HepG2 (cell line): ENCODE measurements at regions of chr11 and their contacts with region 1.

Region 1: GRCh38 chr11:27472398-27473016 is at the start of gene LGR4:
- DNase-seq: peak; percentile 97
- ATAC-seq: peak; percentile 93
- H3K4me3 ChIP-seq: peak within 1 kb of the TSS; percentile 64 to 92 (median 85)
- H3K27ac ChIP-seq: peak within 1 kb of the TSS; percentile 90
- H3K4me1 ChIP-seq: peaks cover 52% of the 10 kb centered on the region
- H3K27me3 ChIP-seq: no peaks in the 10 kb centered on the region; a peak in 1 of 5 replicates
- CTCF ChIP-seq: no peak
- EP300 ChIP-seq: no peak
- POLR2A ChIP-seq: peak; percentile 91 to 95
- RAD21 ChIP-seq: peak; percentile 35; the same call in 1 of the 2 replicates
- total RNA-seq, gene LGR4: 51.4 and 68.7 TPM in 2 replicates

Region 2: GRCh38 chr11:27296497-27296896 is 176.0 kb before region 1 on chr11:
- CTCF ChIA-PET with region 1: no interaction called
- POLR2A ChIA-PET with region 1: interaction called, 8 read pairs
- in situ Hi-C with region 1: no loop called
- intact Hi-C with region 1: loop called (anchors 5 kb)
- DNase-seq: peak; percentile 44
- ATAC-seq: peak; percentile 74
- H3K4me3 ChIP-seq: no peak overlapping the region
- H3K27ac ChIP-seq: no peak overlapping the region
- H3K4me1 ChIP-seq: peaks cover 51% of the 10 kb centered on the region
- H3K27me3 ChIP-seq: no peaks in the 10 kb centered on the region
- CTCF ChIP-seq: peak; percentile 72
- EP300 ChIP-seq: no peak
- POLR2A ChIP-seq: no peak
- RAD21 ChIP-seq: peak; percentile 50

Region 3: GRCh38 chr11:27362749-27363575 is 109.5 kb before region 1 on chr11 and contains the start of gene CCDC34:
- CTCF ChIA-PET with region 1: no interaction called
- POLR2A ChIA-PET with region 1: interaction called, 12 read pairs
- in situ Hi-C with region 1: no loop called
- intact Hi-C with region 1: no loop called
- DNase-seq: peak; percentile 87
- ATAC-seq: peak; percentile 96
- H3K4me3 ChIP-seq: peak within 1 kb of the TSS; percentile 59 to 88 (median 66)
- H3K27ac ChIP-seq: peak within 1 kb of the TSS; percentile 76
- H3K4me1 ChIP-seq: peaks cover 55% of the 10 kb centered on the region
- H3K27me3 ChIP-seq: no peaks in the 10 kb centered on the region; a peak in 1 of 5 replicates
- CTCF ChIP-seq: peak; percentile 42
- EP300 ChIP-seq: no peak
- POLR2A ChIP-seq: peak; percentile 51 to 69; a peak in 3 of 4 replicates
- RAD21 ChIP-seq: peak; percentile 84
- total RNA-seq, gene CCDC34: 34.3 and 37.9 TPM in 2 replicates

Region 4: GRCh38 chr11:27370374-27370773 is 102.1 kb before region 1 on chr11:
- CTCF ChIA-PET with region 1: no interaction called
- POLR2A ChIA-PET with region 1: interaction called, 25 read pairs
- in situ Hi-C with region 1: loop called (anchors 5 kb)
- intact Hi-C with region 1: loop called (anchors 2 kb)
- DNase-seq: no peak
- ATAC-seq: no peak
- H3K4me3 ChIP-seq: no peak overlapping the region
- H3K27ac ChIP-seq: no peak overlapping the region
- H3K4me1 ChIP-seq: peaks cover 27% of the 10 kb centered on the region
- H3K27me3 ChIP-seq: no peaks in the 10 kb centered on the region
- CTCF ChIP-seq: no peak
- EP300 ChIP-seq: no peak
- POLR2A ChIP-seq: no peak
- RAD21 ChIP-seq: no peak

Region 5: GRCh38 chr11:27401833-27402316 is 70.6 kb before region 1 on chr11:
- CTCF ChIA-PET with region 1: no interaction called
- POLR2A ChIA-PET with region 1: interaction called, 40 read pairs
- in situ Hi-C with region 1: loop called (anchors 5 kb)
- intact Hi-C with region 1: no loop called
- DNase-seq: peak; percentile 85
- ATAC-seq: peak; percentile 87
- H3K4me3 ChIP-seq: peak overlapping the region in 2 of 3 experiments; percentile 6; a peak in 1 of 6 replicates
- H3K27ac ChIP-seq: peak overlapping the region; percentile 68
- H3K4me1 ChIP-seq: peaks cover 93% of the 10 kb centered on the region
- H3K27me3 ChIP-seq: no peaks in the 10 kb centered on the region
- CTCF ChIP-seq: no peak
- EP300 ChIP-seq: peak in 1 of 2 experiments; percentile 85; a peak in 2 of 4 replicates
- POLR2A ChIP-seq: no peak
- RAD21 ChIP-seq: no peak

Region 6: DNA sequence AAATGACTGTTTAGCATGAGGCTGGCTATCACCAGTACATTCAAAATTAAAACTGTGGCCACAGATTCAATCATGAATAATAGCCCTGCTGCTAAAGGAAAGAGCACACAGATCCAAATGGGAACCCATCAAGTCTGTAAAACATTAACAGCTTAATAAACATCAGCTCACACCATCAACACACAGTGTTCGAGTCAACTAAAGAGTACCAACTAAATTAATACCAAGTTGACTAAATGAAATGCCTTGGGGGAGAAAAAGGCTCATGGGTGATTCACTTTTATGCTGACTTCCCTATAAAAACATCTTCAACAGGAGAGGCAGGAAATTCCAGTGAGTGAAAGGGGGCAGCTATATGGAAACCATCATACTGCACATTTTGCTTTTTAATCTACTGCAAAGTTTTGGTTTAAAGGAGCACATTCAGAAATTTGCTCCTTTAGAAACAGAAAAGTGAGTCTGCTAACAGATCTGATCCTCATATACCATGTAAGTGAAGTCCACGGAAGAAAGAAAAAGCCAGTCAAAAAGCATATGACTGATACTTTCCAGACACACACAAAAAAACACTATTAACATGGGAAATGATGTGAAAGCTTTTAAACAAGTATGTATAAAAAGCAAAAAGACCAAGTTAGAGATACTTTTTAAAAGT is 16.2 kb before region 1 on chr11:
- CTCF ChIA-PET with region 1: no interaction called
- POLR2A ChIA-PET with region 1: interaction called, 17 read pairs
- in situ Hi-C with region 1: no loop called
- intact Hi-C with region 1: no loop called
- DNase-seq: peak; percentile 55
- ATAC-seq: peak; percentile 52
- H3K4me3 ChIP-seq: peak overlapping the region in 1 of 3 experiments; percentile 23; a peak in 1 of 6 replicates
- H3K27ac ChIP-seq: peak overlapping the region; percentile 5
- H3K4me1 ChIP-seq: peaks cover 90% of the 10 kb centered on the region
- H3K27me3 ChIP-seq: no peaks in the 10 kb centered on the region
- CTCF ChIP-seq: no peak
- EP300 ChIP-seq: peak in 1 of 2 experiments; percentile 23; a peak in 1 of 4 replicates
- POLR2A ChIP-seq: no peak
- RAD21 ChIP-seq: no peak

Region 7: DNA sequence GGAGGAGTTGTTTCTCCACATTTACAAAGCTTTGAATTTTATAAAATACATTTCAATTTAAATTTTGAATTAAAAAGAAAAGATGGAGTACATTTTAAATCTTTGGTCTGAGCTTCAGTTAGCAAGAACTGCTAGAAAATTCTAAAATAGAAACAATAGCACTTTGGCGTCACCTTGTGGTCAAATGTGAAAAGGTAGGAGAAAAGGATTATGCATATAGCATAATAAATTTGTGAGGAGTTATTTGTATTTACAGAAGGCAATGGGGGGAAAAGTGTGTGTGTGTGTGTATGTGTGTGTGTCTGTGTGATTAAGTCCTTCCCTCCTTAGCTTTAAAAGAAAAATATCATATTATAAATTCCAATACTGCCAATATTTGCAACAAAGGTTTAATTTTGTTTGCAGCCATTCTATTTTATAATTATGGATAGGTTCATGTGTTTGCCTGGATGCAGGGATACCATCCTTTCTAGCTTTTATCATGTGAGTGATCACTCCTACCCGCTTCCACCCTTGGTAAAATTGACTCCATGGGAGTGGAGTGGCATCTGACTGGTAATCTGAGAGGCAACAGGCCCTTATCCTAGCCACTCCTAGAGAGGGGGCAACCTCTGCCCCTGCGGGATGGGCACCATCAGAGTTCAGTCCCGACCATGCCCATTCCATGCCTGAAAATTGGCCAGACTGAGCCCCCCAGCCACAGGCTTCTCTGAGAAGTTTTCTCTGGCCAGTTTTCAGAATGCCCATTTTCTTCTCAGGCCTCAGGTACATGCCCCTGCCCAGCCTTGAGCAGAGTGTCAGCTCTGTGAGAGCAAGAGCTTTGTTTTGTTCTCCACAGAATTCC is 13.6 kb after region 1 on chr11:
- CTCF ChIA-PET with region 1: no interaction called
- POLR2A ChIA-PET with region 1: interaction called, 12 read pairs
- in situ Hi-C with region 1: no loop called
- intact Hi-C with region 1: no loop called
- DNase-seq: peak; percentile 54
- ATAC-seq: peak; percentile 54
- H3K4me3 ChIP-seq: no peak overlapping the region
- H3K27ac ChIP-seq: no peak overlapping the region
- H3K4me1 ChIP-seq: peaks cover 6% of the 10 kb centered on the region; the same call in 1 of the 2 replicates
- H3K27me3 ChIP-seq: no peaks in the 10 kb centered on the region; a peak in 1 of 5 replicates
- CTCF ChIP-seq: peak; percentile 75
- EP300 ChIP-seq: no peak
- POLR2A ChIP-seq: no peak
- RAD21 ChIP-seq: peak; percentile 79

Region 8: DNA sequence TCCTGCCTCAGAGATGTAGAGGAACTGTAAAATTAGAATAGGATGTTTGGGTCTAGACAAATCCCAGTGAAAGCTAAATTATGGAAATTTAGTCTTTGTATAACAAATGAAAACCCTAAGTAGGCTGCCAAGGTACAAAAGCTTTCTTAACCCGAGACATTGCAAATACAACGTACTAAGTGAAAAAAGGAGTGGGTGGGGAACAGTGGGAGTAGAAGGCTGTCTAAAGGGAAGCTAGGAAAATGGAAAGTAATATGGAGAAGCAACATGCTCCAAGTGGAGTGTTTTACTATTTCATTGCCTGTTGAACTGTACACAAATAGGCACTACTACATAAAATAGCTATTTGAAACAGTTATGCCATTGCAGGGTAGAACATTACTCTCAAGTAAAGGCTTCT is 40.9 kb after region 1 on chr11:
- CTCF ChIA-PET with region 1: no interaction called
- POLR2A ChIA-PET with region 1: no interaction called
- in situ Hi-C with region 1: no loop called
- intact Hi-C with region 1: no loop called
- DNase-seq: no peak
- ATAC-seq: no peak
- H3K4me3 ChIP-seq: no peak overlapping the region
- H3K27ac ChIP-seq: no peak overlapping the region
- H3K4me1 ChIP-seq: peaks cover 16% of the 10 kb centered on the region
- H3K27me3 ChIP-seq: no peaks in the 10 kb centered on the region
- CTCF ChIP-seq: no peak
- EP300 ChIP-seq: no peak
- POLR2A ChIP-seq: no peak
- RAD21 ChIP-seq: no peak